ENCODE measurements at regions of chr17 and their contacts with region 1.

Region 1: DNA sequence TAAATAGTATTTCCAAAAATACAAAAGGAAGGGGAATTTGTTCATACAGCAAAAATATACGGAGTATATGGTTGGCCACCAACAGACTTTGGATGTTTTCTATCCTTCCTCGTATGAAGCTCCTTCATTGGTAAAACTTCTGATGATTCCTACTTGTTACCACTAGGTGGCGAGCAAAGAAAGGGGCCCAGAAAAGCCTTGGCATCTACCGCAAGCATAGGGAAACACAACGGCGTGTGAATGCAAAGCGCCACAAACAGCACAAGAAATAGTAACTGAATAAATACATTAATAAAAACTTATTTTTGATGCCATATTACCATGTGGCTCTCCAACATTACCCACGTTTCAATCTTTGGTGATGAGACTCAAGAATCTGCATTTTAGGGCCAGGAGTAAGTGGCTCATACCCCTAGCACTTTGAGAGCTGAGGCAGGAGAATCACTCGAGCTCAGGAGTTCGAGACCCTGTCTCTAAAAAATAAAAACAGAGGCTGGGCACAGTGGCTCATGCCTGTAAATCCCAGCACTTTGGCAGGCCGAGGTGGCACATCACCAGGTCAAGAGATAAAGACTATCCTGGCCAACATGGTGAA is 34.5 kb downstream of the YWHAE start:
- DNase-seq: peak; percentile 40
- H3K4me3 ChIP-seq: no peak overlapping the region
- CTCF ChIP-seq: peak; percentile 74

Region 2: GRCh38 chr17:1351971-1352370 is 13.6 kb before region 1 on chr17:
- CTCF ChIA-PET with region 1: interaction called, 22 read pairs
- POLR2A ChIA-PET with region 1: no interaction called
- DNase-seq: no peak
- H3K4me3 ChIP-seq: no peak overlapping the region
- CTCF ChIP-seq: no peak

Region 3: DNA sequence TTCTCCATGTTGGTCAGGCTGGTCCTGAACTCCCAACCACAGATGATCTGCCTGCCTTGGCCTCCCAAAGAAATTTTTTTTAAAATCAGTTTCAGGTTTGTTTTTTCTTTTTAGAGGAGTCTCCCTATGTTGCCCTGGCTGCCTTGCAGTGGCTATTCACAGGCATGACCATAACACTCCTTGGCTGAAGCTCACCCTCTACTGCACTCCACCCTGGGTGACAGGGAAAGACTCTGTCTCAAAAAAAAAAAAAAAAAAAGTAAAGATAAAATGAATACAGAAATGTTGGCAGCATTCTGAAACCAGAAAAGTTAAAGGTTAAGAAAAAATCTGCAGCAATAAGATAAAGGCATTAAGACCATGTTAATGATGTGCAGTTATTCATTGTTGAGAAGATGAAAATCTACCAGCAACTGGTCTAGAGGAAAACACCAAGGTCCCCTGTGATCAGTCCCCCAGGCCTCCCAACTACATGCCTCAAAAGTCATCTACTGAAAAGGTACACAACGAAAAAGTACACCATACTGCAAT is 19.4 kb after region 1 on chr17:
- CTCF ChIA-PET with region 1: interaction called, 133 read pairs
- POLR2A ChIA-PET with region 1: no interaction called
- DNase-seq: no peak
- H3K4me3 ChIP-seq: no peak overlapping the region
- CTCF ChIP-seq: no peak

Region 4: GRCh38 chr17:1398028-1398427 is 32.5 kb after region 1 on chr17:
- CTCF ChIA-PET with region 1: interaction called, 55 read pairs
- POLR2A ChIA-PET with region 1: interaction called, 4 read pairs
- DNase-seq: no peak
- H3K4me3 ChIP-seq: peak overlapping the region; percentile 84
- CTCF ChIP-seq: no peak

Region 5: DNA sequence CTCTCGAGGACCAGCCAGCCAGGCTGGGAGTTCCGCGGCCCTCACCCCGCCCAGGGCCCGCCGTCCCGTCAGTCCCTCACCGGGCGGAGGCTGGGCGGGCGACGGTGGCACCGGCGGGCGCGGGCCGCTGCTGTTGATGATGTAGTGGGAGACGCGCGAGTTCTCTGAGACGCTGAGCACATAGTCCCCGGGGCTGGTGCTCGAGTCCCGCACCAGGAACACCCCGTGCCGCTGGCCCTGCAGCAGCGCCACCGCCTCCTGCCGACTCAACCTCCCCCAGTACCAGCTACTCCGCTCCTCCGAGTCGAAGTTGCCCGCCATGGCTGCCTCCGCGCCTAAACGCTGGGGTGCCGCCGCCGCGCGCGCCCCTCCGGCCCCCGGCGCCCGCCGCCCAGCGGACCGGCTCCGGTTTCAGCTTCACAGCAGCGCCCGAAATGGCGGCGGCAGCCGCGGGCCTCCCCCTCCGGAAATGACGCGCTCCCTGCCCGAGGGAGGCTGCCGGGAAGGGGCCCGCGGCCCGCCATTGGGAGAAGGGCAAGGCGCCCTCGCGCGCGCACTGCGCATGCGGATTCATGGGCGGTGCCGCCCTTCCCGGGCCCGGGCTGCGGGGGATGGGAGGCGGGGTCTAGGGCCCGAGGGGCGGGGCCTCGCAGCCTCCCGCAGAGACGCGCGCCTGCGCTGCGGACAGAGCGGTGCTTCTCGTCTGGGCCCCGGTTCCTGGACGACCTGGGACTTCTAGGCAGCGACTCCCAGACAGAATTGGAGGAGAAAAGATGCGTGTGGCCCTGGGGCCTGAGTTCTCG is 90.5 kb after region 1 on chr17 and contains the start of gene CRK:
- CTCF ChIA-PET with region 1: interaction called, 35 read pairs
- POLR2A ChIA-PET with region 1: no interaction called
- DNase-seq: peak; percentile 50
- H3K4me3 ChIP-seq: peak within 1 kb of the TSS; percentile 86
- CTCF ChIP-seq: no peak

Region 6: DNA sequence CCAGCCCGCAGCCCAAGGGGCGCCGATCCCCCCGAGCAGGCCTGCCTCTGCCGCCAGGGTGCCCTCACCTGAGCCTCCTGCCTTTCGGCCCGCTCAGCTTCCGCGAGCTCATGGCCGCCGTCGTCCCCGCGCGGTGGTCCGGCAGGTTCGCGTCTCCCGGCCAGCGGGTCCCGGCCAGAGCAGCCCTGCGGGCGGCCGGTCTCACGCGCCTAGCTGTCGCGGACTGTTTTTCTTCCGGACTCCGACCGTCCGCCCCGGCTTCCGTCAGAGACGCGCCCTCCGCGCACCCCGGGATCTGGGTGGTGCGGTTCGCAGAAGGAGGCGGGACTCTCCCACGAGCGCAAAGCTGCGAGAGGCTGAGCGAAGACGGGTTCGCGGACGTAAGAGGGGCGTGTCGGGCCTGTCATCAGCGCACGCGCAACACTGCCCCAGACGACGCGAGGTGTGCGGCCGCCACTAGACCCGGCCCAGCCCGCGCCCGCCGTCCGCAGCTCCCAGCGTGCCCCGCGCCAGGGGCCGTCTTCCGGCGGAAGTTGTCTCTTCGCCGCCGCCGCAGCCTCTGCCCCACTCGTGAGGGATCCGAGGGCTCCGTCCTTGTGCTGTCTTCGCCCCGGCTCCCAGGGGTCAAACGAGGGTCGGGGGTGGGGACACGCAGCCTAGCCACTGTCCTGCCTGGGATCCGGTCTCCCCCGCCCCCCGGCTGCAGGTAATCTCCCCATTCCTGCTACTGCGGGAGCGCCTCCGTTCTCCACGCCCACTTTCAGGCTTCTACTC is 151.0 kb after region 1 on chr17 and contains the start of gene INPP5K:
- CTCF ChIA-PET with region 1: interaction called, 46 read pairs
- POLR2A ChIA-PET with region 1: interaction called, 4 read pairs
- DNase-seq: peak; percentile 84
- H3K4me3 ChIP-seq: peak within 1 kb of the TSS; percentile 97
- CTCF ChIP-seq: no peak

Region 7: DNA sequence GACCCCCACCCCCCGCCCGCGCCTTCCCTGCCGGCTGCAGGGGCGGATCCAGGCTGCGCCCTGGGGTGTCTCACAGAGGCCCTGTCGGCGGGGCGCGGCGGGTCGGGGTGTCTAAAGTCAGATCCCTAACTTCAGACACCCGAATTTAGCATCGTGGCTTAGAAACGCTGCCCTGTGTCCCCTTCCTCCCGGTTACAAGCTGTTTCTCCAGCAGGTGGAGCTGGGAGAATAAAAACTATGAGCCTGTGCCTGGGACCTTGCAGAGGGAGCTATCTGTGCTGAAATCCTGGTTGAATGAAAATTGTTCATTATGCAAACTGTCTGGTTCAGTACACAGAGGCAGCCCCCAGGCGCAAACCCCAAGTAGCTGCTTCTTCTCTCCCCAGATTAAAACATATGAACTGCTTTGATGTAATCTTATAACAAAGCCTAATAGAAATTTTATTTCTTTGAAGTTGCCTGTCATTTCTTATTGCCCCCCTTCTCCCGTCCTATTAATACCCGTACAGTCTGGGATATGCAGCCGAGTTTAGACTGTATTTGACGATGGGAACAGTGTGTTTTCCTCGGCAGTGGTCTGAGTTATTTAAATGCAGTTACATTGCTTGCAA is 543.3 kb after region 1 on chr17:
- CTCF ChIA-PET with region 1: no interaction called
- POLR2A ChIA-PET with region 1: no interaction called
- DNase-seq: peak; percentile 14
- H3K4me3 ChIP-seq: peak overlapping the region; percentile 44
- CTCF ChIP-seq: peak; percentile 74

Measured in AG04449 (cell line).